HCT116 (cell line): ENCODE measurements at regions of chr20 and their contacts with region 1.

Region 1: GRCh38 chr20:40265825-40266533 is 423.1 kb downstream of the MAFB start:
- DNase-seq: no peak
- ATAC-seq: peak; percentile 57; the same call in 1 of the 2 replicates
- H3K4me3 ChIP-seq: no peak overlapping the region
- H3K27ac ChIP-seq: no peak overlapping the region
- H3K4me1 ChIP-seq: no peaks in the 10 kb centered on the region
- H3K27me3 ChIP-seq: no peaks in the 10 kb centered on the region
- CTCF ChIP-seq: peak; percentile 26 to 52 (median 39); a peak in 4 of 6 replicates
- POLR2A ChIP-seq: no peak
- RAD21 ChIP-seq: peak; percentile 57

Region 2: DNA sequence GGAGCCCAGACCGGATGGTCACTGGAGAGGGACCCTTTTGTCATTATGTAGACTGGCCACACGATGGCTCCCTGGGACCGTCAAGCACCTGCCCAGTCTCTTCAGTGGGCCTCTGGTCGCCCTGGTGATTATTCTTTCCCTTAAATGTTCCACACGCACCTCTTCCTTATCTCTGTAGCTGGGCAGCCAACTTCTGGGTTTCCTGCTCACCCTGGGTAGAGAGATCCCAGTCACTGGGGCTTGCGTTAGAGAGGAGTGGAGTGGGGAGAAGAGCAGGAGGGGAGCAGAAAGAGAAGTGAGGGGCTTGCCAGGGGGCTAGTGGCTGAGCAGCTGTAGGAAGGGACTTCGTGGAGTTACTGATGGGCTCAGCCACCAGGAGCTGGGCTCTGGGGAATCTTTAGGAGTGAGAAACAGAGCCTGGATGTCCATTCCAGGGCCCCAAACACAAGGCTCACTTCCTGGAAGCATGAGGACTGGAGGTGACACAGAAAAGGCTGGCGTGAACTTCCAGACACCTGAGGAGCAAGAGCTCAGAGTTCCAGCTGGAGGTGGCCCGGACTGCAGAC is 1153.7 kb before region 1 on chr20:
- CTCF ChIA-PET with region 1: no interaction called
- POLR2A ChIA-PET with region 1: no interaction called
- RAD21 ChIA-PET with region 1: no interaction called
- intact Hi-C with region 1: loop called (anchors 5 kb)
- DNase-seq: peak; percentile 50
- ATAC-seq: peak; percentile 76
- H3K4me3 ChIP-seq: no peak overlapping the region
- H3K27ac ChIP-seq: no peak overlapping the region
- H3K4me1 ChIP-seq: peaks cover 30 to 53% of the 10 kb centered on the region in 2 experiments
- H3K27me3 ChIP-seq: peaks cover 6% of the 10 kb centered on the region; the same call in 1 of the 2 replicates
- CTCF ChIP-seq: peak; percentile 57 to 81 (median 70)
- POLR2A ChIP-seq: no peak
- RAD21 ChIP-seq: peak; percentile 90

Region 3: GRCh38 chr20:40532103-40532502 is 266.1 kb after region 1 on chr20:
- CTCF ChIA-PET with region 1: no interaction called
- POLR2A ChIA-PET with region 1: no interaction called
- RAD21 ChIA-PET with region 1: no interaction called
- intact Hi-C with region 1: loop called (anchors 5 kb)
- DNase-seq: peak; percentile 48
- ATAC-seq: peak; percentile 59
- H3K4me3 ChIP-seq: no peak overlapping the region
- H3K27ac ChIP-seq: no peak overlapping the region
- H3K4me1 ChIP-seq: peaks cover 0 to 3% of the 10 kb centered on the region in 2 experiments; a peak in 1 of 4 replicates
- H3K27me3 ChIP-seq: peaks cover 5% of the 10 kb centered on the region; the same call in 1 of the 2 replicates
- CTCF ChIP-seq: peak; percentile 25 to 65 (median 64); a peak in 4 of 6 replicates
- POLR2A ChIP-seq: no peak
- RAD21 ChIP-seq: peak; percentile 58